PC-9 (cell line): ENCODE measurements at regions of chr9 and their contacts with region 1.

Region 1: DNA sequence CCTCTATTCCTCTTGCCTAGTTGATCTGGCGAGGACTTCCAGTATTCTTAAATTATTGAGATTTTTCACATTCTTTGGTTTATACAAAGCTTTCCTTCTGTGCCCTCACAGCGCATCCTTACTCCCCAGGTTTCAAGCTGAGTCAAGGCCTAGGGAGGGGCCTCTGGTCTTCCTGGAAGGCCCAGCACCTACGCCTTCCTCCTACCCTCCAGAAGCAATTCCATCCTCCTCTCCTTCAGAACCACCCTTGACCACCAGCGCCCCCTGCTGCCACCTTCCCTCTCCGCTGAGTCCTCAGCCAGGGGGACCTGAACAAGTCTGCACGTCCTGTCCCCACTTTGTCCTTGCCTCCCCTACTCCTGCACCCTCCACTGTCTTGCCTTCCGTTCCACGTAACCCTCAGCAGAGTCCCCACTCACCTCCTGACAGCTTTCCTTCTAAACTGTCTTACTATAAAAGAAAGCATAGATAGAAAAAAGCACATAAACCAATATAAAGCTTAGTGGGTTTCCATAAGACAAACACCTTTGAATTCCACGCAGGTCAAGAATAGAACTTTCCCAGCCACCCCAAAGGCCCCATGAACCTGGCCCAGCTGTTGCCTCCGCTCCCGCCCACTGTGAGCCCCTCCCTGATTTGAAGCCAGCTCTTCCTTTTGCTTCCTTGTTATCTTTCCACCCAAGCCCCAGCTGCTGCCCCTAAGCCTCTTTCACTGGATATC is 63.0 kb upstream of the CTSL start:
- DNase-seq: peak; percentile 78 to 92
- H3K4me3 ChIP-seq: no peak overlapping the region
- H3K27ac ChIP-seq: no peak overlapping the region
- H3K4me1 ChIP-seq: peaks cover 4% of the 10 kb centered on the region; the same call in 1 of the 2 replicates
- H3K27me3 ChIP-seq: no peaks in the 10 kb centered on the region
- CTCF ChIP-seq: peak; percentile 83

Region 2: GRCh38 chr9:86434039-86434726 is 1228.8 kb before region 1 on chr9:
- CTCF ChIA-PET with region 1: no interaction called
- POLR2A ChIA-PET with region 1: no interaction called
- intact Hi-C with region 1: loop called (anchors 2 kb)
- DNase-seq: peak in 1 of 2 experiments; percentile 2
- H3K4me3 ChIP-seq: no peak overlapping the region
- H3K27ac ChIP-seq: no peak overlapping the region
- H3K4me1 ChIP-seq: no peaks in the 10 kb centered on the region
- H3K27me3 ChIP-seq: no peaks in the 10 kb centered on the region
- CTCF ChIP-seq: peak; percentile 89

Region 3: DNA sequence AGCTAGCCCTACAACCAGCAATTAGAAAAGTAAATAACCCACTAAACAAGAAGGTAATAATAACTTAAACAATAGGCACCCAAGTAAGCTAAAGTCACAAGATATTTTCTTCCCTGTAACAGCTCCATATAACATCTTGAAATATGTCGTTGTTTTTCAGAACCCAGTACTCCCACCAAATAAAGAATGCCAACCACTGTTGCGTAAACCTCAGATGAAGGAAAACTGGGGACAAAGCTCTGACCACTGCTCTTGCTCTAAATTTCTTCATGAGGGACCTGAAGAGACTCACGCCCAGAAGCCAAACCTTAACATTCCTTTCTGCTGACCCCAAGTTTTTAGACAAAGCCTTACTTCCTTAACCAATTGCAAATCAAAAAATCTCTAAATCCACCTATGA is 448.0 kb before region 1 on chr9:
- CTCF ChIA-PET with region 1: no interaction called
- POLR2A ChIA-PET with region 1: interaction called, 10 read pairs
- intact Hi-C with region 1: no loop called
- DNase-seq: peak in 1 of 2 experiments; percentile 44
- H3K4me3 ChIP-seq: no peak overlapping the region
- H3K27ac ChIP-seq: no peak overlapping the region
- H3K4me1 ChIP-seq: peaks cover 31% of the 10 kb centered on the region
- H3K27me3 ChIP-seq: no peaks in the 10 kb centered on the region
- CTCF ChIP-seq: no peak

Region 4: GRCh38 chr9:87422999-87423398 is 240.0 kb before region 1 on chr9:
- CTCF ChIA-PET with region 1: no interaction called
- POLR2A ChIA-PET with region 1: no interaction called
- intact Hi-C with region 1: loop called (anchors 5 kb)
- DNase-seq: no peak
- H3K4me3 ChIP-seq: no peak overlapping the region
- H3K27ac ChIP-seq: no peak overlapping the region
- H3K4me1 ChIP-seq: peaks cover 11% of the 10 kb centered on the region
- H3K27me3 ChIP-seq: no peaks in the 10 kb centered on the region
- CTCF ChIP-seq: no peak

Region 5: DNA sequence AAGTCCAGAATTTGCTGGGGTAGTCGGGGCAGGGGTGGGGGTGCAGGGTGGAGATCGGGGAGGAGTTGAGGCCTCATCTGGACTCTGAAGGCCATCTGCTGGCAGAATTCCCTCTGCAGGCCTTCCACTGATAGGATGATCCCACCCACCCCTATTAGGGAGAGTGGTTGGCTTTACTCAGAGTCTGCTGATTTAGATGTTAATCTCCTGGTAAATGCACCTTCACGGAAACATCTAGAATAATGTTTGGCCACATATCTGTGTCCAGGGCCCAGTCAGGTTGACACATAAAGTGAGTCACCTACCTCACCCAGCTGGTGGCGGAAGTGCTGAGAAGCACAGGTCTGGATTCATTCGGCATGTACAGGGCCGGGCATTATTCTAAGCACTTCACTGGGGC is 115.3 kb before region 1 on chr9:
- CTCF ChIA-PET with region 1: interaction called, 3 read pairs
- POLR2A ChIA-PET with region 1: no interaction called
- intact Hi-C with region 1: loop called (anchors 2 kb)
- DNase-seq: peak; percentile 69 to 80
- H3K4me3 ChIP-seq: no peak overlapping the region
- H3K27ac ChIP-seq: no peak overlapping the region
- H3K4me1 ChIP-seq: peaks cover 17% of the 10 kb centered on the region; the same call in 1 of the 2 replicates
- H3K27me3 ChIP-seq: no peaks in the 10 kb centered on the region
- CTCF ChIP-seq: no peak